ENCODE measurements at regions of chr9 and their contacts with region 1.

Region 1: GRCh38 chr9:19230356-19231125 is at the start of gene DENND4C:
- DNase-seq: peak; percentile 83
- H3K4me3 Mint-ChIP-seq: peak within 1 kb of the TSS; percentile 77
- H3K27ac Mint-ChIP-seq: peak within 1 kb of the TSS; percentile 73
- H3K4me1 Mint-ChIP-seq: peaks cover 8% of the 10 kb centered on the region
- H3K27me3 Mint-ChIP-seq: no peaks in the 10 kb centered on the region
- total RNA-seq, gene DENND4C: 18.4 and 21.1 TPM in 2 replicates

Region 2: DNA sequence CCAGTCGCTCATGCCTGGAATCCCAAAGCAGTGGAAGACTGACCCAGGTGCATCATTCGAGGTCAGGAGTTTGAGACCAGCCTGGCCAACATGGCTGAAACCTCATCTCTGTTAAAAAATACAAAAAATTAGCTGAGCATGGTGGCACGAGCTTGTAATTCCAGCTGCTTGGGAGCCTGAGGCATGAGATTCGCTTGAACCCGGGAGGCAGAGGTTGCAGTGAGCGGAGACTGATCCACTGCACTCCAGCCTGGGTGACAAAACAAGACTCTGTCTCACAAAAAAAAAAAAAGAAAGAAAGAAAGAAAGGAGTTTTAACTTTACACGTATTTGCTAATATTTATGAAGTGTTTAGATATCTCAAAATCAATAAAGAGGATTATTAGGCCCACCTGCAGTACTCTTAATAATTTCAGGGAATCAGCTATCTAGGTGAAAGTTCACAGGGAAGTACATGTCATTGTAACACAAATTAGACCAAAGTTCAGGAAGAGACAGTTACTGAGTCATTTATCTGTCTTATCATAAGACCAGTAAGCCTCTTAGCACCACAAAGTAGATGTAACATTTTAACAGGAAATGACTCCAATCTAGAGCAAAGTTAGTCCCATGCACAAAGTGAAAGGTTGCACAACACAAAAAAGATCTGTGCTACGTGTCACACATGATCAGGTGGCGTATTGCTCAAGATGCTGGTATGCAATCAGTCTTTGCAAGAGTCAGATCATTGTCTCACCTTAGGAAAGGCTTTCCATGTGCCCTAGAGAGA is 69.1 kb before region 1 on chr9:
- intact Hi-C with region 1: loop called (anchors 1 kb)
- DNase-seq: peak; percentile 60
- H3K4me3 Mint-ChIP-seq: peak overlapping the region; percentile 48
- H3K27ac Mint-ChIP-seq: peak overlapping the region; percentile 95
- H3K4me1 Mint-ChIP-seq: peaks cover 19% of the 10 kb centered on the region
- H3K27me3 Mint-ChIP-seq: no peaks in the 10 kb centered on the region

Region 3: DNA sequence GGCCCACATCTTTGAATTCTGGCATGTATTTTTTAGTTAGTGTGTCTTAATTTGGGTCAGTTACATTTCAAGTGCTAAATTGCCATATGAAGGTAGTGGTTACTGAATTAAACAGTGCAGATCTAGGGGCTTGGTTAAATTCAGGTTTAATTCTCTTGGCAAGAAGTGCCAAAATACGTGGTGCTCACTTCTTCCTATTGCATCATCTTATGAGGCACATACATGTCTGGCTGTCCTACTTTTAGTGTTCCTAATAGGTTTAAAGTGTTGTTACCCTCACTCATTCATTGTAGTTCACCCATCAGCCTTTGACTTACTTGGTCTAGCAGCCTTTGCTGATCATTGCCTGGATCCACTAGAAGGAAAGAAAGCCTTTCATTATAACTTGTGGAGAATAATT is 90.0 kb after region 1 on chr9:
- intact Hi-C with region 1: loop called (anchors 5 kb)
- DNase-seq: no peak
- H3K4me3 Mint-ChIP-seq: no peak overlapping the region
- H3K27ac Mint-ChIP-seq: no peak overlapping the region
- H3K4me1 Mint-ChIP-seq: no peaks in the 10 kb centered on the region
- H3K27me3 Mint-ChIP-seq: no peaks in the 10 kb centered on the region

Region 4: GRCh38 chr9:19408693-19409400 is 178.3 kb after region 1 on chr9 and contains the start of gene ACER2:
- intact Hi-C with region 1: loop called (anchors 1 kb)
- DNase-seq: peak; percentile 95
- H3K4me3 Mint-ChIP-seq: peak within 1 kb of the TSS; percentile 97
- H3K27ac Mint-ChIP-seq: peak within 1 kb of the TSS; percentile 27
- H3K4me1 Mint-ChIP-seq: peaks cover 18% of the 10 kb centered on the region
- H3K27me3 Mint-ChIP-seq: peaks cover 10% of the 10 kb centered on the region
- total RNA-seq, gene ACER2: 1.3 and 1.4 TPM in 2 replicates

Region 5: DNA sequence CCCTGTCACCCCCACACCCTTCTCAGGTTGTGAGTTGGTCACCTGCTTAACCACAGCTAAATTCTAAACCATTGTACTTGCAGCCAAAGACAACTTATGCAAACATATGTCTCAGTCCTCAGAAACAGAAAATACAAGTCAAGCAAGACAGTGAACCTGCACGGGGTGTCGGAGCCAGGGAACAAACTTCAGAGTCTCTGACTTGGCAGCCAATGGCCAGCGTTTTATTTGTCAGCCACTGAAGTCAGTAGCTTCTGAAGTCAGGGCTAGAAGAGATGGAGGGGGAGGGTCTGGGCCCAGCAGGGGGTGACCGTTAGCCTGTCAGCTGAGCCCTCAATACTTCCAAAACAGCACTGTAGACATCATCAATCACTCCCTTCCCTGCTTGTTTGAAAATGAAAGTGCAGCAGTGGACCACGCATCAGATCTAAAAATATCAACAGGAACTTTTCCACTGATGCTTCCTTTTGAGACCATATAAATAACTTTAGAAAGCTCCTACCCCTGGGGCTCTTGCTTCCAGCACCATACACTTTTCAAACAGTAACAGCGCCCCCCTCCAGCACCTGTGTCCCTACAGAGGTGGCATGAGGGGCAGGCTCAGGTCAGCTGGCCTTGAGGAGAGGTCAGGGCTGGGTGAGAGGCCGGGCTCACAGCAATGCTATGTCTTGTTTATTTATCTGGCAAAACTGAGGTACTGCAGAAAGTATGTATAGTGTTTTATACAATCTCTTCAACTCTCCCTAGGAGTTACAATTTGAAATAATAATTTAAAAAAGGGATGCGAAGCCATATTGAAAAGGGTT is 320.8 kb after region 1 on chr9:
- intact Hi-C with region 1: no loop called
- DNase-seq: no peak
- H3K4me3 Mint-ChIP-seq: no peak overlapping the region
- H3K27ac Mint-ChIP-seq: no peak overlapping the region
- H3K4me1 Mint-ChIP-seq: no peaks in the 10 kb centered on the region
- H3K27me3 Mint-ChIP-seq: no peaks in the 10 kb centered on the region